ENCODE measurements at regions of chr11 and their contacts with region 1.

Region 1: GRCh38 chr11:44775366-44775984 is 48.7 kb downstream of the TSPAN18 start:
- DNase-seq: peak; percentile 61
- H3K4me3 Mint-ChIP-seq: no peak overlapping the region
- H3K27ac Mint-ChIP-seq: no peak overlapping the region
- H3K4me1 Mint-ChIP-seq: no peaks in the 10 kb centered on the region
- H3K27me3 Mint-ChIP-seq: peaks cover 2% of the 10 kb centered on the region

Region 2: GRCh38 chr11:44632466-44633136 is 142.9 kb before region 1 on chr11:
- CTCF ChIA-PET with region 1: interaction called, 12 read pairs
- POLR2A ChIA-PET with region 1: no interaction called
- DNase-seq: peak; percentile 52
- H3K4me3 Mint-ChIP-seq: no peak overlapping the region
- H3K27ac Mint-ChIP-seq: no peak overlapping the region
- H3K4me1 Mint-ChIP-seq: peaks cover 14% of the 10 kb centered on the region
- H3K27me3 Mint-ChIP-seq: peaks cover 14% of the 10 kb centered on the region

Region 3: DNA sequence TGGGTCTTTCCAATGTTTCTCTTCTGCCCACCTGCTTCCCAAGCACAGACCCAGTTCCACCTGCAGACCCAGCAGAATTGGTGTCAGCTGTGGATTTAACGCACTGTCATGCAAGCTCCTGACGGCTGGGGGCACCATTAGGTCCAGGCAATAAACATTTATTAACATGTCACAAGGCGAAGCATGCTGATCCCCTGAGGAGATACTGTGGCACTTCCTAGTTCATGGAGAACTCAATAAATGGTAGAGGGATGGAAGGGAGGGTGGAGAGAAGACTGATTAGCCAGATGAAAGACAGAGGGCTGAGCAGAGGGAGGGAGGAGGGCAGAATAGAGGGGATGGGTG is 117.0 kb before region 1 on chr11:
- CTCF ChIA-PET with region 1: interaction called, 15 read pairs
- POLR2A ChIA-PET with region 1: interaction called, 4 read pairs
- DNase-seq: peak; percentile 59
- H3K4me3 Mint-ChIP-seq: no peak overlapping the region
- H3K27ac Mint-ChIP-seq: peak overlapping the region; percentile 45
- H3K4me1 Mint-ChIP-seq: peaks cover 33% of the 10 kb centered on the region
- H3K27me3 Mint-ChIP-seq: peaks cover 11% of the 10 kb centered on the region